ENCODE measurements at regions of chr19 and their contacts with region 1.

Region 1: DNA sequence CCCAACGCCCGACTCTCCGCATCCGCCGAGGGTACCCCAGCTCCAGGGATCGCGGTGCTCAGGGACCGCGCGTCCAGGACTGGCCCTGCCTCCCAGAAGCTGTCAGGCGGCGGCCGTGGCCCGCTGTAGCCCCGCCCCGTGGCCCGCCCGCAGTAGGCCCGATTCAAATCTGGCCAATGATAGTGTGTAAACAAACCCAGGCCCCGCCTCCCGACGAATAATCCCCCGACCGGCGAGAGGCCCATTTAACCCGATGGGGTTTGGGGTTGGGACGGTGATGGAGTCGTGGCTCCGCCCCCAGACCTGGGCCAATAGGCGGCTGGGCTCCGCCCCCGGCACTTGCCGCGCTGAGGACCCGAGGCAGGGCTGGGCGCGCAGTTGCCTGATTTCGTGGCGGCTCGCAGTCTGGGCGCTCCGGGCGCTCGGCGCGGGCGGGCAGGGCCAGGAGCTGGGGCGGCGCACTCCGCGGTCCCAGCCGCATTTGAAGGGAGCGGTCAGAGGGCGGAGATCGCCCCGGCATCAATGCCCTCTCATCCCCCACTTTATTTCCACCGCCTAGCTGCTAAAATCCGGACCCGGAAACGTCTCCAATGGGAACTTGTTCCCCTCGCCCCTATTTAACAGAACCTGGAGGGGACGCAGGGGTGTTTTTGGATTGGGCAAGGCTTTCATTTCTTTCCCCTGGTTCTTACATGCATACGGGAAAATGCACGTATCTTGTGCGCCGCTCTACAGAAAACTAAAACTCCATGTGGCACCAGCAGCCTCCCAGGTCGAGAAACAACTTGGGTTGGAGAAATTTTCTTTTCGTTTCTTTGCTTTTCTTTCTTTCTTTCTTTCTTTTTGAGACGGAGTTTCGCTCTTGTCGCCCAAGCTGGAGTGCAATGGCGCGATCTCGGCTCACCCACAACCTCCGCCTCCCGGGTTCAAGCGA is 8.4 kb upstream of the BICRA start:
- H3K4me3 Mint-ChIP-seq: peak overlapping the region; percentile 85
- H3K27ac Mint-ChIP-seq: peak overlapping the region; percentile 74
- H3K4me1 Mint-ChIP-seq: peaks cover 66% of the 10 kb centered on the region
- H3K27me3 Mint-ChIP-seq: peaks cover 15% of the 10 kb centered on the region

Region 2: GRCh38 chr19:47582320-47582909 is 18.1 kb before region 1 on chr19:
- intact Hi-C with region 1: no loop called
- H3K4me3 Mint-ChIP-seq: no peak overlapping the region
- H3K27ac Mint-ChIP-seq: no peak overlapping the region
- H3K4me1 Mint-ChIP-seq: peaks cover 6% of the 10 kb centered on the region
- H3K27me3 Mint-ChIP-seq: peaks cover 28% of the 10 kb centered on the region

Region 3: GRCh38 chr19:47663841-47664771 is 63.6 kb after region 1 on chr19:
- intact Hi-C with region 1: loop called (anchors 5 kb)
- H3K4me3 Mint-ChIP-seq: peak overlapping the region; percentile 26
- H3K27ac Mint-ChIP-seq: peak overlapping the region; percentile 89
- H3K4me1 Mint-ChIP-seq: peaks cover 86% of the 10 kb centered on the region
- H3K27me3 Mint-ChIP-seq: no peaks in the 10 kb centered on the region

Region 4: GRCh38 chr19:47682939-47683338 is 82.4 kb after region 1 on chr19:
- intact Hi-C with region 1: no loop called
- H3K4me3 Mint-ChIP-seq: no peak overlapping the region
- H3K27ac Mint-ChIP-seq: no peak overlapping the region
- H3K4me1 Mint-ChIP-seq: no peaks in the 10 kb centered on the region
- H3K27me3 Mint-ChIP-seq: no peaks in the 10 kb centered on the region

Measured in dendritic cell treated with granulocyte-macrophage colony-stimulating factor and Interleukin-4, amounts not matched to agents 40 ng/mL and 50 ng/mL, for 4 days (primary cell).